ENCODE measurements at regions of chr22 and their contacts with region 1.

Region 1: DNA sequence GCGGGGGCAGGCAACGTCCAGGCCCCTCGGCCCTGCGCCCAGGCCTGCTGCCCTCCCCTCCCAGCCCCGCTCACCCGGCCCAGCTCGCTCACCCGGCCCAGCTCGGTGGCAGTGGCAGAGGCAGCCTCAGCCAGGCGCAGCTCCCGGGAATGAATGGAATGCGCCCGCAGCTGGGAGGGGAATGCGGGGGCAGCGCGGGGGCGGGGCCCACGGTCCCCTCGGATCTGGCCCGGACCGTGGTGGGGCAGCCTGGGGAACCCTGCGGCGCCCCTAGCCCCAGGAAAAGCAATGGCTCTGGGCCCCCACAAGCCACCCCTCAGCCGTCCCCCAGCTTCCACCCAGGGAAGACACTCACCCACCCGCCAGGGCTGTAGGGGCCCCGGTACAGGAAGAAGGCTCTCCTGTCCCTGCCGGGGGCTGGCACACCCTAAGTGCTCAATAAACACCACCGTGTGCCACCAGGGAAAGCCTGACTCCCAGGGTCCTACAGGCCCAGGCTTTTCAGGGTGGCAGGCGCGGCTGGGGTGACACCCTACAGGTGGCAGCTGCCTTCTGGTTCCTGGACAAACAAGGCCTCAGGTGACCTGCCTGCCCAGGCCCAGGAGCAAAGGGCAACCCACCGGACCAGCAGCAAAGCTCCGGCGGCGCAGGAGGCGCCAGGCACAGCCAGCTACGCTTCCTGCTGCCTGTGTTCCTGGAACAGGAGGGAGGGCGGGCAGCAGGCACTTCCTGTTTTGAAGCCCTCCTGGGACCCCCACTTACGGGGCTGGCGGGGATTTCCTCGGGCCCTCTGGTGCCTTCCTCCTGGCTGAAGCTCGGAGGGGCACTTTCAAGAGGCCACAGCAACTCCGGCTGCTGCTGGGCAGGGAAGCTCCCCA is 13.8 kb downstream of the PLXNB2 start:
- DNase-seq: peak; percentile 89

Region 2: DNA sequence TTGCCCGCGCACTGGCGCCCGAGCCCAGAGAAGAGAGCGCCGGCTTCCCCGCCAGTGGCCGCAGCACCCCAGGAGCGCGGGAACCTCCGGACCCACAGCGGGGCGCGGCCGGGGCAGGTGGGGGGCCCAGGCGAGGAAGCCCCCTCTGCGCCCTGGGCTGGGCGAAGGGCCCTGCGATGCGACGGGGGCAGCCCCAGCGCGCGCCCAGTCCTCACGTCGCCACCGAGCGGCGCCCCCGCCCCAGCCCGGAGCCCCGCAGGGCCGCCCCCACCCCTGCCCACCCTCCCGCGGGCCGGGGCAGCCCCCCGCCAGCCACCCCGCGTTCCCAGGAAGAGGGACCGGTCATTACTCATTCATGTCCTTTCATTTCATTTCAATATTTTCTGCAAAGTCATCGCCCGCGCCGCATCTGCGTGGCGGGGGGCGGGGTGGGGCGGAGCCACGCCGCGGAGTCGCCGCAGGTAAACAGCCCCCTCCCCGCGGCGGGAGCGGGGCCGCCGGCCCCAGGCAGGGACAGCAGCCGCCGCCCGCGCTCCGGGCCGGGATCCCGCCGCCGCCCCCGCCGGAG is 123.8 kb before region 1 on chr22:
- intact Hi-C with region 1: no loop called
- DNase-seq: peak; percentile 90

Region 3: DNA sequence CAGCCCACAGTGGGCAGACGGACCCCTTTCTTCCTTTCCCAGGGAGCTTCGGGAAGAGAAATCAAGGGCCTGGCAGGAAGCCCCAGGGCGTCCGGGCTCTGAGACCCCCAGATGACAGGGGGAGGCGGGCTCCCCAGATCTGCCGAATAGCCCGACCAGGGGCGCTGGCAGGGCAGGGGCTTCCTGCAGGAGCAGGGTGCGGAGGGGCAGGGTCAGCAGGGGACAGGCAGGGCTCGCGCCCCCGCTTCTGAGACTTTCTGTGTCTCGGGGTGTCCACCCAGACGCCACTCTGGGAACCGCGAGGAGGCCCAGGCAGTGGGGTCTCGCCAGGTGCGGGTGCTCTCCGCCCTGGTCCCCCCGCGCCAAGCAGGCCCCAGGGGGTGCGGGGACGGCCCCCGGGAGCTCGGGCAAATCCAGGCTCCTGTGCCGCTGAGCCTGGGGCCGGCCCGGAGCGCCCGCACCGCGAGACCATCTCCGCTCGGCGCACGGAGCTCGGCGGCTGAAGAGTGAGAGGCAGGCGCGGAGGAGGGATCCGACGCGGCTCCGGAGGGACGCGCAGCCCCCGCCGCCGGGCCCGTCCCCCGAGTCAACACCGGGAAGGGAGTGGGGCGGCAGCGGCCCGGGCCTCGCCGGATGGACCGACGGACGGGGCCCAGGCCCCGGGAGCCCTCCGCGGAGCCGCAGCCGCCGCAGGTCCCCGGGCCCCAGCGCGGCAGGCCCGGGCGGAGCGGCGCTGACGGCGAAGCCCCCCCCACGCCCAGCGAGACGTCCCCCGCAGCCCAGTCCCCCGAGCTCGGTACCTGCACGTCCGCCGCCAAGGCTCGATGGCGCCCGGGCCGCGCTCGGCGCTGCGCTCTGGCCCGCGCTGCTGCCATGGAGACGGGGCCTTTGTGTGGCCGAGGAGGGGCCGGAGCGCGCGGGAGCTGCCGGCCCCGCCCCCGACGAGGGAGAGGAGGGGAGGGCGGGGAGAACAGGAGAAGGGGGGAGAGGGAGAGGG is 13.4 kb after region 1 on chr22 and contains the start of gene PLXNB2:
- intact Hi-C with region 1: loop called (anchors 2 kb)
- DNase-seq: peak; percentile 88
- total RNA-seq, gene PLXNB2: 85.7 TPM

Region 4: DNA sequence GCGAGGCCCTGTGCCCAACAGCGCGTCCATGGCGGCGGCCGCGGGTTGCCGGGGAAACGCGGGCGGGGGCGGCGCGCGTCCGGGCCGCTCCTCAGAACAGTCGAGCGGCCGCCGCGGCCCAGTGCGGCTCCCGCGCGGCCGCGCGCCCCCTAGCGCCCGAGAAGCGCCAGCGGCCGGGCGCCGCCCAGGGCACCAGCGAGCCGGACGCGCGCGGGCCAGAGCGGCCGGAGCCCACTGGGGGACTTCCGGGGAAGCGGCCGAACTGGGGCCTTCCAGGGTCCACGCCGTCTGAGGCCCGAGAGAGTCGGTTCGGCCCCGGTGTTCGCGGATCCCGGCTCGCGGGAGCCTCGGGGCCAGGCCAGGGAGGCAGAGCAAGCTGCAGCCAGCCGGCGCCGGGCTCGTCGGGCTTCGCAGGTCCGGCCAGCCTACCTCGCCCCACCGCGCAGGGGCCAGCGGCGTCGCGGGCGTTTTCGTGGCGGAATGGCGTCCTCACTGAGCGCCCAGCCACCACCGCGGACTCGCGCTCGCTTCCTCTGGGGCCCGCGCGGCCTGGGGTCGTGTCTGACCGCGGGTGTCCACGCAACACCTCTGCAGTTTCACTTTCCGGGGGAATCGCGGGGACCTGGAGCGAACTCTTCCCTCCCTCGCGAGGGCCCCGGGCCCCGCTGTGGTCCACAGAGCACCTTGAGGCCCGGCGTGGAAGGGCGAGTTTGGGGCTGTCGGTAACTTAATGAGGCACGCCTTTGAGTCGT is 33.5 kb after region 1 on chr22 and contains the start of gene DENND6B:
- intact Hi-C with region 1: loop called (anchors 5 kb)
- DNase-seq: peak; percentile 92
- total RNA-seq, gene DENND6B: 2.8 TPM